PC-3 (cell line): ENCODE measurements at regions of chr5 and their contacts with region 1.

Region 1: GRCh38 chr5:170861837-170862766 is at the start of gene RANBP17:
- DNase-seq: peak; percentile 32
- ATAC-seq: peak; percentile 77
- H3K4me3 ChIP-seq: peak within 1 kb of the TSS; percentile 79
- H3K27ac ChIP-seq: no peak within 1 kb of the TSS
- H3K4me1 ChIP-seq: peaks cover 6% of the 10 kb centered on the region; the same call in 1 of the 2 replicates
- H3K27me3 ChIP-seq: no peaks in the 10 kb centered on the region
- CTCF ChIP-seq: no peak
- total RNA-seq, gene RANBP17: 6.0 and 19.3 TPM in 2 replicates

Region 2: DNA sequence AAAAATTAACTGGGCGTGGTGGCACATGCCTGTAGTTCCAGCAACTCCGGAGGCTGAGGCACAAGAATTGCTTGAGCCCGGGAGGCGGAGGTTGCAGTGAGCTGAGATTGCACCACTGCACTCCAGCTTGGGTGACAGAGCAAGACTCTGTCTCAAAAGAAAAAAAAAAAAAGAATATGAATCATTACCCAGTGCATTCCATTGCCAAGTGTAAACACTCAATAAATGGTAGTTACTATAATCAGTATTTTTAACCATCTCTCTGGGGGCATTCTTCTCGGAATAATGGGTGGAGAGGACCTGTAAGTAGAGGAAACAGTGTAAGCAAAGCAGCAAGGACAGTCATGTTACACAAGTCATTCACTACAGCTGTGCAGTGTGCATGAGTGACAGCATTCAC is 14.1 kb before region 1 on chr5:
- CTCF ChIA-PET with region 1: no interaction called
- POLR2A ChIA-PET with region 1: no interaction called
- intact Hi-C with region 1: no loop called
- DNase-seq: peak; percentile 30
- ATAC-seq: peak; percentile 48; the same call in 1 of the 2 replicates
- H3K4me3 ChIP-seq: no peak overlapping the region
- H3K27ac ChIP-seq: no peak overlapping the region
- H3K4me1 ChIP-seq: no peaks in the 10 kb centered on the region
- H3K27me3 ChIP-seq: no peaks in the 10 kb centered on the region
- CTCF ChIP-seq: no peak

Region 3: GRCh38 chr5:170885779-170886178 is 23.7 kb after region 1 on chr5:
- CTCF ChIA-PET with region 1: no interaction called
- POLR2A ChIA-PET with region 1: no interaction called
- intact Hi-C with region 1: no loop called
- DNase-seq: no peak
- ATAC-seq: no peak
- H3K4me3 ChIP-seq: no peak overlapping the region
- H3K27ac ChIP-seq: no peak overlapping the region
- H3K4me1 ChIP-seq: peaks cover 1% of the 10 kb centered on the region
- H3K27me3 ChIP-seq: no peaks in the 10 kb centered on the region
- CTCF ChIP-seq: no peak

Region 4: GRCh38 chr5:170896779-170897178 is 34.7 kb after region 1 on chr5:
- CTCF ChIA-PET with region 1: no interaction called
- POLR2A ChIA-PET with region 1: interaction called, 3 read pairs
- intact Hi-C with region 1: loop called (anchors 2 kb)
- DNase-seq: peak; percentile 19
- ATAC-seq: peak; percentile 32; the same call in 1 of the 2 replicates
- H3K4me3 ChIP-seq: no peak overlapping the region
- H3K27ac ChIP-seq: no peak overlapping the region
- H3K4me1 ChIP-seq: peaks cover 11% of the 10 kb centered on the region; the same call in 1 of the 2 replicates
- H3K27me3 ChIP-seq: no peaks in the 10 kb centered on the region
- CTCF ChIP-seq: peak; percentile 44; the same call in 1 of the 2 replicates

Region 5: DNA sequence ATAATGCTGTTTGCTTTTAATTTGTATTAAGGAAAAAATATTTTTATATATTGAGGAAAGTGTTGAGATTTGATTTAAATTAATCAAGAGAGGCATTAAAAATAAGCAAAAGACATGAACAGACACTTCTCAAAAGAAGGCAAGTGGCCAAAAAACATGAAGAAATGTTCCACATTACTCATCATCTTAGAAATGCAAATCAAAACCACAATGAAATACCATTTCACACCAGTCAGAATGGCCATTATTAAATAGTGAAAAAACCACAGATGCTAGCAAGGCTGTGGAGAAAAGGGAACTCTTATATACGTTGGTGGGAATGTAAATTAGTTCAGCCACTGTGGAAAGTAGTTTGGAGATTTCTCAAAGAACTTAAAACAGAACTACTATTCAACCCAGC is 45.7 kb after region 1 on chr5:
- CTCF ChIA-PET with region 1: no interaction called
- POLR2A ChIA-PET with region 1: no interaction called
- intact Hi-C with region 1: loop called (anchors 5 kb)
- DNase-seq: no peak
- ATAC-seq: no peak
- H3K4me3 ChIP-seq: no peak overlapping the region
- H3K27ac ChIP-seq: no peak overlapping the region
- H3K4me1 ChIP-seq: no peaks in the 10 kb centered on the region
- H3K27me3 ChIP-seq: no peaks in the 10 kb centered on the region
- CTCF ChIP-seq: no peak